IMR-90 (cell line): ENCODE measurements at regions of chr11 and their contacts with region 1.

Region 1: GRCh38 chr11:20443596-20443995 is 56.1 kb downstream of the PRMT3 start:
- DNase-seq: peak; percentile 28
- ATAC-seq: peak; percentile 59
- H3K4me3 ChIP-seq: no peak overlapping the region
- H3K27ac ChIP-seq: no peak overlapping the region
- H3K4me1 ChIP-seq: no peaks in the 10 kb centered on the region
- H3K27me3 ChIP-seq: no peaks in the 10 kb centered on the region
- CTCF ChIP-seq: peak; percentile 50
- POLR2A ChIP-seq: no peak
- RAD21 ChIP-seq: peak; percentile 36

Region 2: DNA sequence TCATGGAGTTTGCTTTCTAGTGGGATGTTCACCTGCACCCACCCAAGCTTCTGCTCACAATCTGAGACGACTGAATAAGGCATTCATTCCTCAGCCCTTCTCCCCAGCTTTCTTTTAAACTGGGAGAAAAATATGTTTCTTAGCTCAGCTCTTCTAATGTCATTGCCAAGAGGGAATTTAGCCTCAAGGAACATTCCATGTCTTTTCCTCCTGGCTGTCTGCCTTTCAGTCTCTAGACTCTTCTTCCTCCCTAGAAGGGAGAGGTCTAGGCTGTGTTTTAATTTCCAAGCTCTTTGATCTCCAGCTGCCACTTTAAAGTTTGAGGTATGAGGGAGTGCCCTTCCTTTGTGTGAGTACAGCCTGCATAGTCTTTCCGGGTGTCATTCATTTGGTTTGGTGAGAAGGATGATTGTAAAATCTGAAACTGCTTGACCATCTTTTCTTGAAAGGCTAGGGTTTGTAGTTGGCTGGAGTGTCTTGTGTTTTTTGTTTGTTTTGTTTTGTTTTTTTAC is 91.8 kb before region 1 on chr11:
- CTCF ChIA-PET with region 1: no interaction called
- POLR2A ChIA-PET with region 1: no interaction called
- dilution Hi-C with region 1: no loop called
- in situ Hi-C with region 1: no loop called
- intact Hi-C with region 1: no loop called
- DNase-seq: no peak
- ATAC-seq: no peak
- H3K4me3 ChIP-seq: no peak overlapping the region
- H3K27ac ChIP-seq: no peak overlapping the region
- H3K4me1 ChIP-seq: no peaks in the 10 kb centered on the region
- H3K27me3 ChIP-seq: peaks cover 15% of the 10 kb centered on the region
- CTCF ChIP-seq: no peak
- POLR2A ChIP-seq: no peak
- RAD21 ChIP-seq: no peak

Region 3: DNA sequence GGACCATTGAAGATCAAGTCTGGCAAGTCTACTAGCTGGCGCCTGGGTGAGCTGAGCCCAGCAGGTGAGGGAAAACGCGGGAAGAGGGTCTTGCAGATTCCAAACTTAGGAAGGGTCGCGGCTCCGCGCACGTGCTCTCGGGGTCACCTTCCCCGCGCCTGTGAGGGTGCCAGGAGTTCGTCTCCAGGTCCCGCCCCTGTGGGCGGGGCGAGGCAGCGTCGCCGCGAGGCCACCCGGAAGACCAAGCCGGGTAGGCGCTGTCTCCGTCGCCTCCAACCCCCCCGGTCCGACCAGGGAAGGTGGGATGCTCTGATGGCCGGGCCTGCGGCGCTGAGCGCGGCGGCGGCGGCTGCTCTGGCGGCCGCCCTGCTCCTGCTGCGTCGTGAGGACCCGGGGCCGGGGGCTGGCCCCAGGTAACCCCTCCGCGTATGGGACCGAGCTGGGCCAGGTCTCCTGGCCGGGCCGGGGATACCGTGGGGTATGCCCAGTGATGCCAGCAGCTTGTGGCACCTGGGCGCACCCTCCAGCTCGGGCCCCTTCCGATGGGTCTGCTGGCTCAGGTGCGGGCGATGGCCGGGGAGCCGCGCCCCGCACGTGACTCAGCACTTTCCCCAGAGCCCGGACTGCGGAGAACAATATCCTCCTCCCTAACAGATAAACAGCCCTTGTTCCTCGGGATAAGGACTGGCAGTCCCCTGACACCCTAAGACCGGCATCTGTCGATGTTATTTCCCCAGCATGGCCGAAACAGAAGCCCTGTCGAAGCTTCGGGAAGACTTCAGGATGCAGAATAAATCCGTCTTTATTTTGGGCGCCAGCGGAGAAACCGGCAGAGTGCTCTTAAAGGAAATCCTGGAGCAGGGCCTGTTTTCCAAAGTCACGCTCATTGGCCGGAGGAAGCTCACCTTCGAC is 79.8 kb before region 1 on chr11 and contains the start of gene HTATIP2:
- CTCF ChIA-PET with region 1: no interaction called
- POLR2A ChIA-PET with region 1: no interaction called
- dilution Hi-C with region 1: no loop called
- in situ Hi-C with region 1: no loop called
- intact Hi-C with region 1: no loop called
- DNase-seq: peak; percentile 33
- ATAC-seq: peak; percentile 72
- H3K4me3 ChIP-seq: peak within 1 kb of the TSS; percentile 59
- H3K27ac ChIP-seq: peak within 1 kb of the TSS; percentile 51
- H3K4me1 ChIP-seq: peaks cover 15% of the 10 kb centered on the region
- H3K27me3 ChIP-seq: no peaks in the 10 kb centered on the region
- CTCF ChIP-seq: no peak
- POLR2A ChIP-seq: no peak
- RAD21 ChIP-seq: no peak
- total RNA-seq, gene HTATIP2: 7.2 and 13.6 TPM in 2 replicates

Region 4: GRCh38 chr11:20387241-20388095 is 56.1 kb before region 1 on chr11 and contains the start of gene PRMT3:
- CTCF ChIA-PET with region 1: no interaction called
- POLR2A ChIA-PET with region 1: no interaction called
- dilution Hi-C with region 1: no loop called
- in situ Hi-C with region 1: no loop called
- intact Hi-C with region 1: loop called (anchors 2 kb)
- DNase-seq: peak; percentile 94
- ATAC-seq: peak; percentile 92
- H3K4me3 ChIP-seq: peak within 1 kb of the TSS; percentile 94
- H3K27ac ChIP-seq: peak within 1 kb of the TSS; percentile 99
- H3K4me1 ChIP-seq: peaks cover 3% of the 10 kb centered on the region
- H3K27me3 ChIP-seq: no peaks in the 10 kb centered on the region
- CTCF ChIP-seq: peak; percentile 90
- POLR2A ChIP-seq: peak; percentile 94
- RAD21 ChIP-seq: no peak; the same call in 1 of the 2 replicates
- total RNA-seq, gene PRMT3: 11.3 and 15.0 TPM in 2 replicates

Region 5: GRCh38 chr11:20397281-20397680 is 46.3 kb before region 1 on chr11:
- CTCF ChIA-PET with region 1: interaction called, 7 read pairs
- POLR2A ChIA-PET with region 1: no interaction called
- dilution Hi-C with region 1: no loop called
- in situ Hi-C with region 1: no loop called
- intact Hi-C with region 1: loop called (anchors 1 kb)
- DNase-seq: peak; percentile 57
- ATAC-seq: peak; percentile 87
- H3K4me3 ChIP-seq: no peak overlapping the region
- H3K27ac ChIP-seq: no peak overlapping the region
- H3K4me1 ChIP-seq: no peaks in the 10 kb centered on the region
- H3K27me3 ChIP-seq: no peaks in the 10 kb centered on the region
- CTCF ChIP-seq: peak; percentile 61
- POLR2A ChIP-seq: no peak
- RAD21 ChIP-seq: peak; percentile 44